WTC11 (cell line): ENCODE measurements at regions of chr13 and their contacts with region 1.

Region 1: DNA sequence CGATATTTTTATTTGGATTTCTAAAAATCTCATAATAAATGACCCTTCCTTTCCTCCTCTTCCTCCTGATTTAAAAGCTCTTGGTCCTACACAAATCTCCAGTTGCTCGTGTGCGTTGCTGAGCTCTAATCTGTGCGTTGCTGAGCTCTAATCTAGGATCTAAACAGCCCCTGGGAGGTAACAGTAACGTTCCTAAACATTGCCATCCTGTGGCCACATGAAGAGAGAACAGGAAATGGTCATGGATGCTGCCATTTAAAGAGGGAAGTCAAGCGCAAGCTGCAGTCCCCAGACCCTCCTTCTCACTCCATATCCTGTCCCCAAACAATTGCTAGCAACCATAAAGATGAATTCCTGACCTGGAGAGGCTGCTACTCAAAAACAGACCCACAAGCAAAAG is 170.8 kb downstream of the NUFIP1 start:
- DNase-seq: no peak
- ATAC-seq: peak; percentile 79
- H3K4me3 Mint-ChIP-seq: no peak overlapping the region
- H3K27ac Mint-ChIP-seq: no peak overlapping the region
- H3K4me1 Mint-ChIP-seq: peaks cover 44% of the 10 kb centered on the region
- H3K27me3 Mint-ChIP-seq: no peaks in the 10 kb centered on the region; the same call in 1 of the 2 replicates
- CTCF ChIP-seq: no peak

Region 2: GRCh38 chr13:44484562-44485138 is 333.8 kb before region 1 on chr13:
- CTCF ChIA-PET with region 1: interaction called, 23 read pairs
- POLR2A ChIA-PET with region 1: no interaction called
- DNase-seq: no peak
- ATAC-seq: no peak
- H3K4me3 Mint-ChIP-seq: no peak overlapping the region
- H3K27ac Mint-ChIP-seq: 0 out of 2 replicates have a peak overlapping the region, but pooled peaks have one; percentile 10
- H3K4me1 Mint-ChIP-seq: peaks cover 6% of the 10 kb centered on the region
- H3K27me3 Mint-ChIP-seq: no peaks in the 10 kb centered on the region
- CTCF ChIP-seq: no peak